H1 (cell line): ENCODE measurements at regions of chr3 and their contacts with region 1.

Region 1: DNA sequence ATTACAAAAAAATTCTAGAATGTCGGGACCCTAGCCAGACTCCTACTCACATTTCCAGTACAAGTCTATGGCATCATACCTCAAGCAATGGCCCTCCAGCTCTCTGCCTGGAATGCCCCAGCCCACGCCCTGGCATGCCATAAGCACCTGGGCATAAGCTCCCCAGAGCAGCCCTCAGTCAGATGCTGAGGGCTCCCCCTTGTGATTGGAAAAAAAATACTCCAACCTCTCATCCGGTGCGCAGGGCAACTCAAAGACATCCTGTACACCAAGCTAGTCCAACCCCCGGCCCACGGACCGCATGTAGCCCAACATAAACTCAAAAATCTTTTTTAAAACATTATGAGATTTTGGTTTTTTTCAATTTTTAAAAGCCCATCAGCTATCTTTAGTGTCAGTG is 115.4 kb downstream of the NEK10 start:
- DNase-seq: peak; percentile 17 to 66
- H3K4me3 ChIP-seq: no peak overlapping the region
- H3K27ac ChIP-seq: no peak overlapping the region
- H3K4me1 ChIP-seq: no peaks in the 10 kb centered on the region
- H3K27me3 ChIP-seq: peaks cover 0 to 1% (median 0%) of the 10 kb centered on the region in 4 experiments; a peak in 1 of 7 replicates
- CTCF ChIP-seq: peak; percentile 55 to 80 (median 66)
- EP300 ChIP-seq: no peak
- POLR2A ChIP-seq: no peak
- RAD21 ChIP-seq: peak; percentile 85 to 87

Region 2: GRCh38 chr3:27134165-27134796 is 119.5 kb before region 1 on chr3:
- CTCF ChIA-PET with region 1: interaction called, 64 read pairs
- POLR2A ChIA-PET with region 1: no interaction called
- DNase-seq: peak in 1 of 2 experiments; percentile 72
- H3K4me3 ChIP-seq: no peak overlapping the region
- H3K27ac ChIP-seq: no peak overlapping the region
- H3K4me1 ChIP-seq: no peaks in the 10 kb centered on the region
- H3K27me3 ChIP-seq: no peaks in the 10 kb centered on the region
- CTCF ChIP-seq: peak; percentile 76 to 97 (median 89)
- EP300 ChIP-seq: no peak
- POLR2A ChIP-seq: no peak
- RAD21 ChIP-seq: peak; percentile 96 to 98

Region 3: GRCh38 chr3:27147215-27147614 is 106.6 kb before region 1 on chr3:
- CTCF ChIA-PET with region 1: interaction called, 39 read pairs
- POLR2A ChIA-PET with region 1: no interaction called
- DNase-seq: no peak
- H3K4me3 ChIP-seq: no peak overlapping the region
- H3K27ac ChIP-seq: no peak overlapping the region
- H3K4me1 ChIP-seq: no peaks in the 10 kb centered on the region
- H3K27me3 ChIP-seq: no peaks in the 10 kb centered on the region
- CTCF ChIP-seq: no peak
- EP300 ChIP-seq: no peak
- POLR2A ChIP-seq: no peak
- RAD21 ChIP-seq: no peak

Region 4: DNA sequence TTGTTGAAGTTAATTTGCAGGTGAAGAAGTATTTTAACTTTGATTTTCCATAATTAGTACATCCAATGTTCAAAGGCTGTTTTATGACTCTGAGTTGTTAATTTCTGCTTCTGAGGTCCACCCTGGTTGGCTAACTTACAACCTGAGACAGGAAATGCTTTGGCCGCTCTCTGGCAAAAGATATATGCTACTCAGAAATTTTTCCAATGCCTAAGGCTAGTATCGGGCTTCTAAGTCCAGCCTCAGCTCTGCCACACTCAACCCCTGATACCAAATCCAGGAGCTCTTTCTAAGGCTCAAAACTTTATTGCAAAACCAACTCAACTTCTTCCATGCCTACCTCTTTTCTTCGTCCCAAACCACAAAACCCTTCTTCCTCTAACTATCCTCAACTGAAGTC is 77.6 kb before region 1 on chr3:
- CTCF ChIA-PET with region 1: interaction called, 22 read pairs
- POLR2A ChIA-PET with region 1: no interaction called
- DNase-seq: no peak
- H3K4me3 ChIP-seq: no peak overlapping the region
- H3K27ac ChIP-seq: no peak overlapping the region
- H3K4me1 ChIP-seq: no peaks in the 10 kb centered on the region
- H3K27me3 ChIP-seq: no peaks in the 10 kb centered on the region
- CTCF ChIP-seq: no peak
- EP300 ChIP-seq: no peak
- POLR2A ChIP-seq: no peak
- RAD21 ChIP-seq: no peak

Region 5: DNA sequence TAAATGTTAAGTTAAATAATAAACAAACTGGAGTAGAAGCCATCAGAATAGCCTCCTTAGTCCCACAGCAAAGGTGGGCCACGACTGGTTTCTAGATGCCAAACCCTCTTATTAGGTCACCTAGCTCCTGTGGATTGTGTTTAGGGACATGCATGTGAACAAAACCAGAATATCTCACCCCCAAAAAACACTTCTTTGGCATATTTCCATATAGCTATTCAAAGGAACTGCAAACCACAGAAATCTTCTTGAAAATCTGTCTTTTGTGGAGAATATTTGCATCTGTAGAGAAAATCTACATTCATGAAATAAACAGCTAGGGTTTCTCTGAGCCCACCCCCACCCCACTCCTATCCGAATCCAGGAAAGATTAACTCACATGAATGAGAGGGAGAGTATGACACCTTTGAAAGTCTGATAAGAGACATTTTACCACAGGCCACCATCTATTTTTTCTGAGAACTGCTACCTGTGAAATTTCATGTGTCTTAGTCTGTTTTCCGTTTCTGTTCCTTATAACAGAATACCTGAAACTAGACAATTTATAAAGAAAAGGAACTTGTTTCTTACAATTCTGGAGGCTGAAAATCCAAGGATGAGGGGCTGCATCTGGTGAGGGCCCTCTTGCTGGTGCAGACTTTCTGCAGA is 44.1 kb before region 1 on chr3:
- CTCF ChIA-PET with region 1: interaction called, 13 read pairs
- POLR2A ChIA-PET with region 1: no interaction called
- DNase-seq: no peak
- H3K4me3 ChIP-seq: no peak overlapping the region
- H3K27ac ChIP-seq: no peak overlapping the region
- H3K4me1 ChIP-seq: peaks cover 0 to 18% (median 5%) of the 10 kb centered on the region in 4 experiments; a peak in 4 of 7 replicates
- H3K27me3 ChIP-seq: no peaks in the 10 kb centered on the region
- CTCF ChIP-seq: no peak
- EP300 ChIP-seq: no peak
- POLR2A ChIP-seq: no peak
- RAD21 ChIP-seq: no peak

Region 6: GRCh38 chr3:27271890-27272289 is 18.1 kb after region 1 on chr3:
- CTCF ChIA-PET with region 1: interaction called, 26 read pairs
- POLR2A ChIA-PET with region 1: no interaction called
- DNase-seq: no peak
- H3K4me3 ChIP-seq: no peak overlapping the region
- H3K27ac ChIP-seq: no peak overlapping the region
- H3K4me1 ChIP-seq: no peaks in the 10 kb centered on the region
- H3K27me3 ChIP-seq: no peaks in the 10 kb centered on the region
- CTCF ChIP-seq: no peak
- EP300 ChIP-seq: no peak
- POLR2A ChIP-seq: no peak
- RAD21 ChIP-seq: no peak